ENCODE measurements at regions of chr7 and their contacts with region 1.

Region 1: DNA sequence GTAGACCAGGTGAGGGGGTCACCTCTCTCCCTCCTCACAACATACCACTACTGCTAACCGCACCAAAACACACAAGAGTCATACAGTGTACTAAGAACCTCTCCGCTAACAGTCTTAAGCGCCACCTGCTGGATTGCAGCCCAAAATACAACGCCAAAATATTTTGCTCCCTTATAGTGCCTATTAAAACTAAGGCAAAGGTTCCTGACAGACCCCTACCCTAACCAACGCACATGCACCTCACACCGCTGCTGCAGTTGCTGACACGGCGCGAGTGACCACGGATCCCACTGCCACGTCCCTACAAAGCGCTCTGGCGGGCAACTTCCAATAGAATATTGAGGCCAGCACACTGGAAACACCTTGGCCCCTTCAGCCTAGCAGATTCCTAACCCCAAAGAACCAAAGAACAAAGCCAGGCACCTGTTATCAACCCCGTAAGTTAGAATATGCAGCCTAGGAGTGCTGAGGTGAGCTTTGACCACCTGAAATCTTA is 563.6 kb upstream of the SEMA3D start:
- DNase-seq: peak; percentile 21
- H3K4me3 ChIP-seq: no peak overlapping the region
- H3K27ac ChIP-seq: no peak overlapping the region
- H3K4me1 ChIP-seq: no peaks in the 10 kb centered on the region
- H3K27me3 ChIP-seq: peaks cover 2% of the 10 kb centered on the region
- CTCF ChIP-seq: peak; percentile 60 to 88

Region 2: DNA sequence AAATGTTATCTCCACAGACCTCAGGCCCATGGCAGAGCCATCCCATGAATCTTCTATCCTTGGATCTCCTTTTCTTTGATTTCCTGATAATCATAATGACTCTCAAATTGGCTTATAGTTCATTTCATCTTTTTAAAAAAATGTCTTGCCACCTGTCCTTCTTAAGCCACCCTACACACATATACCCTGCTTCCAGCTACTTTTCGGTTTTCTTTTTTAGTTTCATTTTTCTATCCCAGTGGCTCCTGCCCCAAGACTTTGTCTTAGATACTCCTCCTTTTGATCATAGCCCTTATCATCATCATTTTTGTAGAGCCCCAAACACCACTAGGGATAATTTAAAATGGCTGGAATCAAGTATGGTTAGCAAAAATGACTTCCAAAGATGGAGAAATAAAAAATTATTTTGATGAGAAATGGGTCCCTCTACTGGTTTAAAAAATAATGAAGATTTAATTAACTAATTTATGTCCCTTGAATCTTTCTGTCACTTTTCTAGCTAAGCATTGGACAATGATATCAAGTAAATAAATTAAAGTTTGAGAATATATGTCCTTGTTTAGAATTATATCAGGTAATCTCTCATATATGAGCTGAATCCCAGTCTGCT is 286.4 kb before region 1 on chr7:
- CTCF ChIA-PET with region 1: no interaction called
- dilution Hi-C with region 1: no loop called
- in situ Hi-C with region 1: no loop called
- intact Hi-C with region 1: loop called (anchors 10 kb)
- DNase-seq: no peak
- H3K4me3 ChIP-seq: no peak overlapping the region
- H3K27ac ChIP-seq: no peak overlapping the region
- H3K4me1 ChIP-seq: no peaks in the 10 kb centered on the region
- H3K27me3 ChIP-seq: no peaks in the 10 kb centered on the region
- CTCF ChIP-seq: peak; percentile 19 to 21

Region 3: DNA sequence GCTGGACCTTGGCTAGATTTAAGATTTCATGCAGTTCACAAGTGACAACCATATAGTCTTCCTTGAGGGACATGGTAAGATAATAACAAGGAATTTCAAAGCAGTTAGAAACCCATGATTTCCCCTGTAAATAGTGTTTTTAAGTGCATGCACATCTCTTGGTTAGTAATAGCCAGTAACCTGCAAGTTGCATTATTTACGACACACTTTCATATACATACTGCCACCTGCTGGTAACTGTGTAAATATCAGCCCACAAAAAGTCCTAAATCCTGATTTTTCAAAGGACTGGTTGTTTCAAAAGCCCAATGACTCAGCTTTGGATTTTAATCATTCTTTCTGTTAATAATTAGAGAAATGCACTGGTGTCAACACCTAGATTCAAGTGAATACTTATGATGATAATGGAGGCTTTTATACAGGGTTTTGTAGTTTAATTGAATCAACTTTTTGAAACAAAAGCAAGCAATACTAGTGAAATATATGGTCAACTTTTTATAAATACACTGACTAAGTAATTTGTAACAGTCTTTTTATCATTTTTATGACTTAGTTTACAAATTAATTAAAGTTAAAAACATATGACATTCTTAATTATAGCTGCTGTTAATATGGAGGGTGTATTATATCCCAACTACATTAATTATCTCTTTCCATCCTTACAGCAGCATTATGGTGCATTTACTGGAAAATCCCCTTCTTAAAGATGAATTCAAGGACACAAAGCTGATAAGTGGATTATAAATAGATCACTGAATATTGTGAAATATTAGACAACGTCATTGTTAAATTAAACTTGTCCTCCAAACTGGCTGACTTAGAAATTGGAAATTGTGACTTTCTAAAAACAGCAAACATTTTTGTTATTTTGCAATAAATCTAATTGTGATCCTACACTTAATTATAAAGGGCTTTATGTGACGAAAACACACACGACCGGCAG is 196.0 kb before region 1 on chr7:
- CTCF ChIA-PET with region 1: no interaction called
- dilution Hi-C with region 1: no loop called
- in situ Hi-C with region 1: loop called in 1 of 2 experiments (anchors 25 kb)
- intact Hi-C with region 1: loop called (anchors 2 kb)
- DNase-seq: peak; percentile 55
- H3K4me3 ChIP-seq: no peak overlapping the region
- H3K27ac ChIP-seq: no peak overlapping the region
- H3K4me1 ChIP-seq: no peaks in the 10 kb centered on the region
- H3K27me3 ChIP-seq: peaks cover 1% of the 10 kb centered on the region
- CTCF ChIP-seq: peak; percentile 55 to 71

Region 4: GRCh38 chr7:85765698-85766298 is 15.3 kb after region 1 on chr7:
- CTCF ChIA-PET with region 1: no interaction called
- dilution Hi-C with region 1: no loop called
- in situ Hi-C with region 1: no loop called
- intact Hi-C with region 1: no loop called
- DNase-seq: no peak
- H3K4me3 ChIP-seq: no peak overlapping the region
- H3K27ac ChIP-seq: no peak overlapping the region
- H3K4me1 ChIP-seq: no peaks in the 10 kb centered on the region
- H3K27me3 ChIP-seq: no peaks in the 10 kb centered on the region
- CTCF ChIP-seq: no peak